ENCODE measurements at regions of chr15 and their contacts with region 1.

Region 1: DNA sequence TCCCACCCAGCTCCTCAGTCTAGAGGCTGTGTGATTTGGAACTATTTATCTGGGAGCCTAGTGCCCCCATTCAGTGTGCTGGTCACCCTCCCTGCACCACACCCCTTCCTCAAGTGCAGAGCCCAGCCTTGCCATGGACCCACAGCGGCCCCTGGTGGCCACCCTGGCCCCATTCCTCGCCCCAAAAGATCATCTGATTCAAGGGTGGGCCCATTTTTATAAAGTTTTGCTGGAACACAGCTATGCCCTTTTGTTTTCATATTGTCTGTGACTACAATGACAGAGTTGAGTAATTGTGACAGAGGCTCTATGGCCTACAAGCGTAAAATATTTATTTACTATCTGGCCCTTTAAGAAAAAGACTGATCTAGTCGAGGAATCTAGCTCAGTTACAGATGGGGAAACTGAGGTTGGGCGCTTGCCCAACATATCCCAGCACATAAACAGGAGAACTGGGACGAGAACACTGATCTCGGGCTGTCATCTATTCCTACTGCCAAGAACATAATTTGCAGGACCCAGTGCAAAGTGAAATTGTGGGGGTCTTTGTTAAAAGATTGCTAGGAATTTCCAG is 1.8 kb downstream of the FES start:
- DNase-seq: peak in 1 of 2 experiments; percentile 96
- H3K4me3 ChIP-seq: no peak overlapping the region
- H3K27ac ChIP-seq: no peak overlapping the region
- H3K4me1 ChIP-seq: peaks cover 0 to 24% (median 15%) of the 10 kb centered on the region in 4 experiments; a peak in 6 of 7 replicates
- H3K27me3 ChIP-seq: no peaks in the 10 kb centered on the region
- CTCF ChIP-seq: peak in 2 of 3 experiments; percentile 91; a peak in 3 of 4 replicates
- EP300 ChIP-seq: 0 out of 3 replicates have a peak, but pooled peaks of 1 of the 2 experiments have one; percentile 29
- POLR2A ChIP-seq: no peak
- RAD21 ChIP-seq: peak; percentile 99

Region 2: GRCh38 chr15:90648137-90649070 is 237.7 kb before region 1 on chr15:
- CTCF ChIA-PET with region 1: interaction called, 19 read pairs
- POLR2A ChIA-PET with region 1: no interaction called
- DNase-seq: peak in 1 of 2 experiments; percentile 74
- H3K4me3 ChIP-seq: no peak overlapping the region
- H3K27ac ChIP-seq: no peak overlapping the region
- H3K4me1 ChIP-seq: peaks cover 0 to 6% (median 4%) of the 10 kb centered on the region in 4 experiments; a peak in 6 of 7 replicates
- H3K27me3 ChIP-seq: no peaks in the 10 kb centered on the region
- CTCF ChIP-seq: peak; percentile 40 to 84 (median 83)
- EP300 ChIP-seq: no peak
- POLR2A ChIP-seq: no peak
- RAD21 ChIP-seq: peak; percentile 90 to 95

Region 3: GRCh38 chr15:90716976-90717821 is 168.9 kb before region 1 on chr15 and contains the start of gene BLM:
- CTCF ChIA-PET with region 1: interaction called, 13 read pairs
- POLR2A ChIA-PET with region 1: no interaction called
- DNase-seq: peak; percentile 91 to 92
- H3K4me3 ChIP-seq: peak within 1 kb of the TSS; percentile 63 to 98 (median 86)
- H3K27ac ChIP-seq: peak within 1 kb of the TSS; percentile 86
- H3K4me1 ChIP-seq: peaks cover 0 to 3% (median 2%) of the 10 kb centered on the region in 4 experiments; a peak in 4 of 7 replicates
- H3K27me3 ChIP-seq: no peaks in the 10 kb centered on the region
- CTCF ChIP-seq: peak; percentile 7 to 42 (median 22); a peak in 3 of 4 replicates
- EP300 ChIP-seq: no peak
- POLR2A ChIP-seq: peak; percentile 90 to 97
- RAD21 ChIP-seq: no peak
- total RNA-seq, gene BLM: 45.6 and 46.7 TPM in 2 replicates

Region 4: DNA sequence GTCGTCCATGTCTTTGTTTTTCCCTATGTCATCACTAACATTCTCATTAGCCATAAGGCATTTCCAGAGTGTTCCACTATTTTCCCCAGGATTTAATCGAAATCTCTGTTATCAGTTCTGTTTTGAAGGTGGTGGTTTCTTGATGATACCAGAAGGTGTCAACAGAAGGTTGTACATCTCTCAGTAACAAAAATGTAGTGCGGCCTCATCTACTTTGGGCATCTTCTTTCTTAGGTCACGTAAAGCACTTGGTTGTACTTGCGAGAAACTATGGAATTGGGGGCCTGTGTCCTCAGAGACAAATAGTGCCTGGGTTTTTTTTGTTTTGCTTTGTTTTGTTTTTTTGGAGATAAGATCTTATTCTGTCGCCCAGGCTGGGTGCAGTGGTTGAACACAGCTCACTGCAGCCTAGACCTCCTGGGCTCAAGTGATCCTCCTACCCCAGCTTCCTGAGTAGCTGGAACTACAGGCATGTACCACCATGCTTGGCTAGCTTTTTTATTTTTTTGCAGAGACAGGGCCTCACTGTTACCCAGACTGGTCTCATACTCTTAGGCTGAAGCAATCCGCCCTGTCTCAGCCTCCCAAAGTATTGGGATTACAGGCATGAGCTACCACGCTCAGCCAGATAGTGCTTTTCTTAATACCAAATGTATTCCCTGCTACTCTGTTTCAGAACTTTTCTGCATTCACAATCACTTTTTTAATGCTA is 78.9 kb before region 1 on chr15:
- CTCF ChIA-PET with region 1: interaction called, 132 read pairs
- POLR2A ChIA-PET with region 1: no interaction called
- DNase-seq: no peak
- H3K4me3 ChIP-seq: no peak overlapping the region
- H3K27ac ChIP-seq: no peak overlapping the region
- H3K4me1 ChIP-seq: no peaks in the 10 kb centered on the region
- H3K27me3 ChIP-seq: no peaks in the 10 kb centered on the region
- CTCF ChIP-seq: no peak
- EP300 ChIP-seq: no peak
- POLR2A ChIP-seq: no peak
- RAD21 ChIP-seq: no peak

Region 5: GRCh38 chr15:90839187-90840071 is 46.7 kb before region 1 on chr15:
- CTCF ChIA-PET with region 1: interaction called, 20 read pairs
- POLR2A ChIA-PET with region 1: interaction called, 4 read pairs
- DNase-seq: peak; percentile 75 to 85
- H3K4me3 ChIP-seq: peak overlapping the region in 3 of 4 experiments; percentile 15 to 30 (median 26); a peak in 3 of 8 replicates
- H3K27ac ChIP-seq: no peak overlapping the region
- H3K4me1 ChIP-seq: peaks cover 6 to 21% (median 18%) of the 10 kb centered on the region in 4 experiments
- H3K27me3 ChIP-seq: no peaks in the 10 kb centered on the region
- CTCF ChIP-seq: no peak; a peak in 1 of 4 replicates
- EP300 ChIP-seq: no peak; a peak in 1 of 3 replicates
- POLR2A ChIP-seq: 0 out of 3 replicates have a peak, but pooled peaks of 1 of the 2 experiments have one; percentile 34
- RAD21 ChIP-seq: no peak; a peak in 1 of 4 replicates

Region 6: DNA sequence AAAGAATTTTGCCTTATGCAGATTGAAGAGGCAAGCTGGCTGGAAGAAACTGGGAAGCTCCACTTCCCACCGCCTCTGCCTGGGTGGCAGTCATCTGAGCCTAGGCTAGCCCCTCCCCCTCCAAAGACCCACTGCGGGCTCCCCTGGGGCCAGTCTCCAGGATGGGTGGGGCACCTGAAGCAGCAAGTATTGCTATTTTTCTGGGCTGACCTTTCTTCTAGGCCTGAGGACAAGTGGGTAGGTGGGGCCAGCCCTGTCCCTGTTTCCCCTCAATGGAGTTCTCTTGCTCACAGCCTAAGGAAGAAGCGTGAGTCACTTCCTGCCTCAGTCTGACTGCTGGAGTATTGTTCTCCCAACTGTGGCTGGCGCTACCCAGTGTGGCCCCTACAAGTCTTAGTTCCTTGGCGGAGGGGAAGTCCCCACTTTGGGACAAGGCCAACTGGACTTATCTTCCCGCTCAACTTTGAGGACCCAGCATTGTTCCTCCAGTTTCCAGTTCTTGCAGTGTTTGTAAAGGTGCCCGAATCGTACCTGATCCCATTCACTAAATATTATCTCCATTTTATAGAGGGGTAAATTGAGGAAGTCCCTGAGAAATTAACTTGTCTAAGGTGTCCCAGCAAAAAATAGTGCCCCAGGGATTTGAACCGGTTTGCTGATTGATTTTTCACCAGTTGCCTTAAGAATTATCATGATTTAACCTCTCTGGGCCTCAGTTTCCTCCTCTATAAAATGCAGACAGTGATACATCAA is 16.4 kb before region 1 on chr15:
- CTCF ChIA-PET with region 1: interaction called, 28 read pairs
- POLR2A ChIA-PET with region 1: interaction called, 22 read pairs
- DNase-seq: peak in 1 of 2 experiments; percentile 76
- H3K4me3 ChIP-seq: no peak overlapping the region
- H3K27ac ChIP-seq: peak overlapping the region; percentile 16; the same call in 1 of the 2 replicates
- H3K4me1 ChIP-seq: peaks cover 23 to 47% (median 30%) of the 10 kb centered on the region in 4 experiments
- H3K27me3 ChIP-seq: no peaks in the 10 kb centered on the region
- CTCF ChIP-seq: no peak
- EP300 ChIP-seq: no peak
- POLR2A ChIP-seq: no peak
- RAD21 ChIP-seq: no peak

Region 7: GRCh38 chr15:91022075-91022835 is 136.1 kb after region 1 on chr15 and contains the start of gene VPS33B:
- CTCF ChIA-PET with region 1: no interaction called
- POLR2A ChIA-PET with region 1: no interaction called
- DNase-seq: peak; percentile 68 to 86
- H3K4me3 ChIP-seq: peak within 1 kb of the TSS; percentile 74 to 99 (median 91)
- H3K27ac ChIP-seq: peak within 1 kb of the TSS; percentile 37; the same call in 1 of the 2 replicates
- H3K4me1 ChIP-seq: peaks cover 0 to 3% (median 1%) of the 10 kb centered on the region in 4 experiments; a peak in 3 of 7 replicates
- H3K27me3 ChIP-seq: no peaks in the 10 kb centered on the region
- CTCF ChIP-seq: no peak
- EP300 ChIP-seq: no peak
- POLR2A ChIP-seq: peak in 1 of 2 experiments; percentile 67; a peak in 1 of 3 replicates
- RAD21 ChIP-seq: no peak
- total RNA-seq, gene VPS33B: 17.3 and 18.3 TPM in 2 replicates

Region 8: GRCh38 chr15:91104111-91104510 is 218.0 kb after region 1 on chr15:
- CTCF ChIA-PET with region 1: no interaction called
- POLR2A ChIA-PET with region 1: no interaction called
- DNase-seq: no peak
- H3K4me3 ChIP-seq: no peak overlapping the region
- H3K27ac ChIP-seq: no peak overlapping the region
- H3K4me1 ChIP-seq: peaks cover 0 to 5% (median 1%) of the 10 kb centered on the region in 4 experiments; a peak in 5 of 7 replicates
- H3K27me3 ChIP-seq: peaks cover 16 to 34% (median 32%) of the 10 kb centered on the region in 4 experiments
- CTCF ChIP-seq: no peak
- EP300 ChIP-seq: no peak
- POLR2A ChIP-seq: no peak
- RAD21 ChIP-seq: no peak

Measured in H1 (cell line).